ENCODE measurements at regions of chr19 and their contacts with region 1.

Region 1: DNA sequence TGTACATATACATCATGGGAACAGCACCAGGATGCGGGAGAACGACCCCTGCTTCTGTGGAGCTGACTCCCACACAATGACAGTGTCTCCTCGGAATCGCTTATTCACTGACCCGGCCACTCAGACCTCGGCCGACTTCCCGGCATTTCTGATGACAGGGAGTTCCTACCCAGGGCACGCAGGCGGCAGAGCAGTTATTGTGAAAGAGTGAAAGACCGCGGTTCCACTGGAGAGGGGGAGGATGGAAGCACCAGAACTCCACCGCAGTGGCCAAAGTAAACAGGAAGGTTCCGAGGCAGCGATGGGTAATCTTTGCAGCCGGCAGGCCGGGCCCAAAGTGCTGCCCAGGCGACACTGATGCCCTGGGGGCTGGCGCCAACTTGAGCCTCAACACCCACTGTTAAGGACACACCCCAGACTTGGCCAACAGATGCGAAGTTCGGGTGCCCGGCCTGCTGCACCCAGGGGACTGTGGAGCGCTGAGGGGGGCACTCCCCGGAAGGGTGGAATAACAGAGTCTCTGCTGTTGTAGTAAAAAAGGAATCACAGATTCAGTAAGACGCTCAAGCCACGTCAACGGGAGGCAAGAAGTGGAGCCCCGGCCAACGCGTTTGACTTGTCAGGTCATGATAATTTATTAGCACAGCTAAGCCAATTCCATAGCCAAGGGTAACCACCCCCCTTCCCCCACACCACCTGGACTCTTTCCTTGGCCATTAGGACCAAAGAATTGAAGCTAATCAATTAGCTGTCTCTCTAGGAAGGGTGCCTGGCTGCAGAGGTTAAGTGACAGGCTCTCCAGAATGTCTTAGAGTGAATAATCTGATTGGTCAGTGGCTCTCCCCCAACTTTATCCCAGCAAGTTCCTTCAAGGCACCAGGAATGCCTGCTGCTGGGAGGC is 5.8 kb downstream of the MLLT1 start:
- DNase-seq: peak; percentile 86 to 90
- ATAC-seq: peak; percentile 82 to 85
- H3K4me3 ChIP-seq: peak overlapping the region; percentile 35 to 48 (median 44)
- H3K27ac ChIP-seq: peak overlapping the region; percentile 84 to 93 (median 90)
- H3K4me1 ChIP-seq: peaks cover 79% of the 10 kb centered on the region in 2 donors
- H3K27me3 ChIP-seq: no peaks in the 10 kb centered on the region
- CTCF ChIP-seq: no peak
- POLR2A ChIP-seq: peak in 1 of 2 donors; percentile 33

Region 2: DNA sequence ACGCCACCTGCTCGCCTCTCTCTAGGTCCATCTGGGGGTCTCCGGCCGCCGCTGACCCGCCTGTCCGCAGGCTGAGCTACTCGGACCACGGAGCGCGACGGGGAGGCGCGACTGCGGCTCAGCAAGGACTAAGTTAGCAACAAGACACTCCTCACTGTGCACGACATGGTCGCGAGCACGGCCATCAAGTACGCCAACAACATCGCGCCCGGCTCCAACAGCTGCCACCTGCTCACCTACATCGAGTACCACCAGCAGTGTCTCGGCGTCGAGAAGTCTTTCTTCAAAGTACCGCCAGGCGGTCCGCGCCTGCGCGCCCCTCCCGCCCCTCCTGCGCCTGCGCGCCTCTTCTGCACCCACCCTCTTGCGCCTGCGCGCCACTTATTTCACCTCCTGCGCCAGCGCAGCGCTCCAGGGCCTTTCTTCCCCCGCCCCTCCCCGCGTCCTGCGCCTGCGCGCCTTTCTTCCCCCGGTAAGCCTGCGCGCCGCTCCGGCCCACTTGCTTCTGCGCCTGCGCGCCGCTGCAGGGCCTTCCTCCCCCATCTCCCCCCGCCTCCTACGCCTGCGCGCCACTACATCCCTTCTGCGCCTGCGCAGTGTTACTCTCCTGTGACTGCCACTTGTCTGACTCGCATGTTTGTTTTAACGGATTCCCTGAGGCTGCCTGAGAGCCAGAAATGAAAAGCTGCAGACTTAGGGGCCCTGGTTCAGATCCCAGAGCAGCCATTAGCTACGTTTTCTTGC is 74.5 kb before region 1 on chr19:
- in situ Hi-C with region 1: no loop called
- intact Hi-C with region 1: loop called (anchors 1 kb)
- DNase-seq: peak; percentile 96 to 99
- ATAC-seq: peak; percentile 94 to 96
- H3K4me3 ChIP-seq: peak overlapping the region; percentile 62 to 85 (median 72)
- H3K27ac ChIP-seq: peak overlapping the region; percentile 69 to 87 (median 80)
- H3K4me1 ChIP-seq: peaks cover 11 to 13% of the 10 kb centered on the region in 2 donors
- H3K27me3 ChIP-seq: no peaks in the 10 kb centered on the region
- CTCF ChIP-seq: peak; percentile 46 to 75 (median 67)
- POLR2A ChIP-seq: no peak

Region 3: DNA sequence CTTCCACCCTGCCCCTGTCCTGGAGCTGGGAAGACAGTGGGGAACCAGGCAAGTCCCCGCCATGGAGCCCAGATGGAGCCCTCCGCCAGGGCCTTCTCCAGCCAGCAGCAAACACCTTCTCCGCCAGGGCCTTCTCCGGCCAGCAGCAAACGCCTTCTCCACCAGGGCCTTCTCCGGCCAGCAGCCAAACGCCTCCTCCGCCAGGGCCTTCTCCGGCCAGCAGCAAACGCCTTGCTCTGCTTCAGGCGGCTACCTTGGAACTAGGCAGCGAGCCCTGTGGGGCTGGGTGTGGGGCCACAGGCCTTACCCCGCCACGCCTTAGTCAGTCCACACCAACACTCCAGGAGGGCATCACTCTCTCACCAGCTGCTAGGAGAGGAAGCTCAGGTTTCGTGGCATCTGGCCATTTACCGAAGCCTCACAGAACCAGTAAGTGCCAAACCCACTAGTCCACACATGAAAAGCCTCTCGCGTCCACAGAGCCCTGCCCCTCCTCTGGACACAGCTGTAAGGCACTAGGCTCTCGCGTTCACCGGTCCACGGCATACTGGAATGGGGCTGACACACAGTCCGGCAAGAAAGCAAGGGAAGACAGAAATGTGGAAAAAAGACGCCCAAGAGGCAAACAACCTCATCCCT is 35.2 kb before region 1 on chr19:
- in situ Hi-C with region 1: no loop called
- intact Hi-C with region 1: loop called (anchors 2 kb)
- DNase-seq: peak; percentile 75 to 88
- ATAC-seq: peak; percentile 83 to 86
- H3K4me3 ChIP-seq: peak overlapping the region in 3 of 4 donors; percentile 4 to 23 (median 4)
- H3K27ac ChIP-seq: peak overlapping the region; percentile 83 to 92 (median 86)
- H3K4me1 ChIP-seq: peaks cover 73 to 81% of the 10 kb centered on the region in 2 donors
- H3K27me3 ChIP-seq: no peaks in the 10 kb centered on the region
- CTCF ChIP-seq: peak in 2 of 5 experiments; percentile 9 to 13
- POLR2A ChIP-seq: no peak

Region 4: DNA sequence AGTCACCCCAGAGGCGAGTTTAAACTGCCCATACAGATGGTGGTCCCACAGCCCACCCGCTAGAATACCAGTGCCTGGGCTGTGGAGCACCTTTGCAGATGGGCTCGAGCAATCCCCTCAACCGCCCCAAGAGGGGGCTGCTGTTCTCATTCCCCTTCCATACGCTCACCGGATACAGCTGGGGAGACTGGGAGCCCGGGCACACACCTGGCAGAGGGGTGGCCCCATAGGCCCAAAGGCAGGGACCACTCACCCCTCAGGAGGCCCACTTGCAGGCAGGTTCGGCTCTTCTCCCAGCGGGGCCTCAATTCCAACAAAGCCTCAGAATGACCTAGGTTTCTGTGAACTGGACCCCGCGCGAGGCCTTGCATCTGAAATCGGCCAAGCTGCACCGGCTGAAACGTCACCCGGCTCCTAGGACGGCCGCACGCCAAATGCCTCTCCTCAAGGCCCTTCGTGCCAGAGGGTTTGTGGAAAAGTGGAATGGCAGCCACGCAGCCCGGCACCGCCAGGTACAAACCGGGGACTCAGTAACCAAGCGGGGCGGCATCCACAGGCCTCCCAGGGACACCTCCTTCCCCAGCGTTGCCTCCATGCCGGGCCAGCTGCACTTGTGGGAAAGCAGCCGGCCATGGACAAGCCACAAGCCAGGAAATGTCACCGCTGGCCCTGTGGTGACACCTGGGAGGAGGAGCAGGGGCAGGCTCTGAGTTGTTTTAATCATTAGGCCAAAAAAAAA is 12.9 kb before region 1 on chr19:
- in situ Hi-C with region 1: no loop called
- intact Hi-C with region 1: no loop called
- DNase-seq: no peak
- ATAC-seq: no peak
- H3K4me3 ChIP-seq: no peak overlapping the region
- H3K27ac ChIP-seq: peak overlapping the region in 2 of 4 donors; percentile 39 to 50
- H3K4me1 ChIP-seq: peaks cover 34 to 58% of the 10 kb centered on the region in 2 donors
- H3K27me3 ChIP-seq: no peaks in the 10 kb centered on the region
- CTCF ChIP-seq: peak in 4 of 5 experiments; percentile 32 to 51 (median 36)
- POLR2A ChIP-seq: no peak

Region 5: GRCh38 chr19:6362027-6362350 is 88.0 kb after region 1 on chr19:
- in situ Hi-C with region 1: no loop called
- intact Hi-C with region 1: loop called (anchors 5 kb)
- DNase-seq: no peak
- ATAC-seq: no peak
- H3K4me3 ChIP-seq: peak overlapping the region; percentile 78 to 87 (median 86)
- H3K27ac ChIP-seq: peak overlapping the region; percentile 84 to 88 (median 86)
- H3K4me1 ChIP-seq: peaks cover 9 to 11% of the 10 kb centered on the region in 2 donors
- H3K27me3 ChIP-seq: no peaks in the 10 kb centered on the region
- CTCF ChIP-seq: no peak
- POLR2A ChIP-seq: no peak

Measured in gastrocnemius medialis (tissue), 4 donors.